ENCODE measurements at regions of chr5 and their contacts with region 1.

Region 1: DNA sequence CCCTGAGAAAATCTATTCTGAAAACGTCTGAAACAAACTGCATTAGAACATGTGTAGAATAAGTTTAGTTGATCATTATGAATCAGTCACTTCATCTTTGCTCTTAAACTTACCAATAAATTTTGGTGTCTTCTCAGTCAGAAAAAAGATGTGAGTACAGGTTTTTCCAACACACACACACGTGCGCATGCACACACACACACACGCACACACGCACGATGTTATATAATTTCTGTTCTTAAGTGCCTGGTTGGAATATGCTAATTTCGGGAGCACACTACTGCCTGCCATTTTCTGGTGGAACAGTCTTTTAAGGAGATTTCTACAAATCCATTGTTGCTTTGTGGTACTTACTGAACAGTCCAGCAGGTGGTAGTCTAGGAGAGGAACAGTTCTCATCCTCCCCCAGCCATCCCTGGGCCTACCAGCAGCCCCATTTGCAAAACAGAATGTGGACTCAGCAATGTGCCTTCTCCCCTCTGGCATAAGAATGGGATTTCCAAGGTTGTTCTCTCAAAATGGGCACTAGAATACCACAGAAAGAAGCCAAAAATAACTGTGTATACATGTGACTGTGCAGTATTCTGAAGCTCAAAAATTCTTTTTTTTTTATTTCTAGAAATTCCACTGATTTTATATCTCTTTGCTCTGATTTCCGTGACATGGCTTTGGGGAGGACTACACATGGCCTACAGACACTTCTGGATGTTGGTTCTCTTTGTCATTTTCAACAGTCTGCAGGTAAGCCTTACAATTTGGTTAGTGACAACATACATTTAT is 281.3 kb downstream of the ARRDC3 start:
- DNase-seq: peak; percentile 81
- ATAC-seq: peak; percentile 95
- H3K4me3 ChIP-seq: no peak overlapping the region
- H3K27ac ChIP-seq: no peak overlapping the region
- H3K4me1 ChIP-seq: no peaks in the 10 kb centered on the region
- H3K27me3 ChIP-seq: no peaks in the 10 kb centered on the region

Region 2: GRCh38 chr5:90866333-90866732 is 235.5 kb before region 1 on chr5:
- intact Hi-C with region 1: loop called in 1 of 2 experiments (anchors 10 kb)
- DNase-seq: no peak
- ATAC-seq: peak; percentile 69
- H3K4me3 ChIP-seq: peak overlapping the region in 1 of 2 donors; percentile 26
- H3K27ac ChIP-seq: no peak overlapping the region
- H3K4me1 ChIP-seq: no peaks in the 10 kb centered on the region
- H3K27me3 ChIP-seq: no peaks in the 10 kb centered on the region

Region 3: DNA sequence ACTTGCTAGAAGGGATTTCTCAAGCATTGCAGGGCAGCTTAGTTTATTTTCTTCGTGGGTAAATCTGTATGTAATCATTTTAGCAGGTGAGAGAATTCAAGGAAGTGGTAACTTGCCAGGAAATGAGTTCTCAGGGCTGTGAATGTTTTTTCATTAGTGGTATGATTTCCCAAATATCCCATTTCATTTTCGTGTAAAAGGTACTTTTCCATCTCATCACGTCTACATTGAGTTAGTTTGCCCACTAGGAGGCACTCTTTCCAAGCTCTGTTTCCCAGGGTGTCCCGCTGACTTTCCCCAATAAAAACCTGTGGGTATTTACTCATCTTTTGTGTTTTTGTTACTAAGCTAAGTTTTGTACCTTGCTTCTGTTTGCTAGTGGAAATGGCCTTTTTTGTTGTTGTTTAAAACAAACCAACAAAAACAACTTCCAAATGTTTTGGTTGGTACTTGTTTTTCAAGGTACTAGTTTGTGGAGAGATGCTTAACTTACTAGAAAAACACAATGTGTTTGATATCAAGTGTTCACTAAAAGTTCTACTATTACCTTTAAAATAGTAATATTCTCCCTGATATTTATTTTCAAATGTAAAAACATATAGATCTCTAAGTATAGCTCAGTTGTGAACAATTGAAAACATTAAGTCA is 169.6 kb before region 1 on chr5:
- intact Hi-C with region 1: loop called (anchors 5 kb)
- DNase-seq: no peak
- ATAC-seq: peak; percentile 83
- H3K4me3 ChIP-seq: no peak overlapping the region
- H3K27ac ChIP-seq: no peak overlapping the region
- H3K4me1 ChIP-seq: no peaks in the 10 kb centered on the region
- H3K27me3 ChIP-seq: no peaks in the 10 kb centered on the region

Region 4: GRCh38 chr5:91219803-91220371 is 118.1 kb after region 1 on chr5:
- intact Hi-C with region 1: loop called in 1 of 2 experiments (anchors 5 kb)
- DNase-seq: no peak
- ATAC-seq: no peak
- H3K4me3 ChIP-seq: no peak overlapping the region
- H3K27ac ChIP-seq: no peak overlapping the region
- H3K4me1 ChIP-seq: no peaks in the 10 kb centered on the region
- H3K27me3 ChIP-seq: no peaks in the 10 kb centered on the region

Region 5: DNA sequence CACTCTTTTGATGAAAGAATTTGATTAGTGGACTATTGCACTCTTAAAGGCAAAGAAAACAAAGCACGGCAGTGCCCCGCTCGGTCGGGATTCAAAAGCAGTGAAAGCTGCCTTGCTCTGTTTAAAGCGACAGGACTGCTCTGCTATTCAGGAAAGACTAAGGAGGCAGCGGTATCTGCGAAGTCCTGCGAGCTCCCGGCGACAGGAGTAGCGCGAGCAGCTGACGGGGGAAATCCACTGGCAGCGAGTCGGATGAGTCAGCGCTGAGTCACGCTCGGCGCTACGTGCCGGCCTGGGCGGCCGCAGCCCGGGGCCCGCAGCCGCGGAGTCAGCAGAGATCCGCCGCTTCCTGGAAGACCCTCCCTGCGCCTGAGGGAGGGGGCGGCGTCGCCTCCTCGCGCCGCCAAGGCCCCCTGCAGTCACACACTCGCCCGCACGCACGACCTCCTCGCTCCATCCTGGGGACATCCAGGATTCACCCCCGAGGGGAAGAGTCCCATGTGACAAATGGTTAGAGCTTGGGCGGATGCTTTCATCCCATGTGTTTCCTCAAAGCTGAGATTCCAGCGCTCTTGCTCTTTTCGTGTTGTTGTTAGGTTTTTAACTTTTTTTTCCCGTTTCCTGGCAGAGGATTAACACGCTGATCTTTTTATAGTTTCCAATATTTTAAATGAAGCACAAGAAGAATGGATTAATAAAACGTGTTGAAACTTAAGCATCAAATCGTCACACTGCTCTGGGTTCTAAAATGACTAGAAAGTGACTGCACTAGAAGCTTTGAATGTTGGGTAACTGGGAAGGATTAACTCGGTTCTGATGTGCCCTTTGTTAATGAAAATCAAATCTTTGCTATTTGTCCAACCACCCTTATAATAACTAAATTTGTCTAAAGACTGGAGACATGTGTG is 178.8 kb after region 1 on chr5:
- intact Hi-C with region 1: loop called in 1 of 2 experiments (anchors 10 kb)
- DNase-seq: peak; percentile 97 to 99
- ATAC-seq: peak; percentile 99
- H3K4me3 ChIP-seq: peak overlapping the region; percentile 37 to 76
- H3K27ac ChIP-seq: peak overlapping the region; percentile 23 to 97
- H3K4me1 ChIP-seq: no peaks in the 10 kb centered on the region
- H3K27me3 ChIP-seq: no peaks in the 10 kb centered on the region

Measured in aorta (tissue), 5 donors.